GM10248 (cell line): ENCODE measurements at regions of chr2 and their contacts with region 1.

Region 1: DNA sequence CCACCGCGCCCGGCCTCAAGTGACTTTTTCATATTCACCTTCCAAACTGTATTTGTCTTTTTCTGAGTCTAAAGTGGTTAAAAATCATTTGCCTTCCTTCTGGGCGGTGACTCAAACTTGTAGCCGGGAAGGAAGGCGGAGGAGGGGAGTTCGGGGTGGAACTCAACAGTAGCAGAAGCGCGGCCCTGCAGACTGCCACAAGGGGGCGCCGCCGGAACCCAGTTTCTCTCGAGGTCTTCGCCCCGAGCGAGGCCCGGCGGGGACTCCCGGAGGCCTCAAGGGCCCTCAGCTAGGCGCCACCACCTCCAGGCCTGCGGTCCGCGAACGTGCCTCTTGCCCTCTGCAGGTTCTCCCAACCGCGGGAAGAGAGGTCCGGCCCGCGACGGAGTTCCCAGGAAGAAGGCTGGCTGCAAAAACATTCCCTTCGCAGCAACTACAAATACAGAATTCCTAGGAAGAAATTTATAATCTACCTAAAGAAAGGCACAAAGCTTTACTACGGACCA is 16.8 kb upstream of the ITM2C start:
- DNase-seq: peak; percentile 92
- CTCF ChIP-seq: peak; percentile 91

Region 2: GRCh38 chr2:230658877-230659652 is 188.9 kb before region 1 on chr2:
- CTCF ChIA-PET with region 1: no interaction called
- POLR2A ChIA-PET with region 1: no interaction called
- DNase-seq: peak; percentile 77
- CTCF ChIP-seq: no peak

Region 3: GRCh38 chr2:230864598-230865306 is 16.8 kb after region 1 on chr2 and contains the start of gene ITM2C:
- CTCF ChIA-PET with region 1: interaction called, 35 read pairs
- POLR2A ChIA-PET with region 1: no interaction called
- DNase-seq: peak; percentile 90
- CTCF ChIP-seq: peak; percentile 58

Region 4: DNA sequence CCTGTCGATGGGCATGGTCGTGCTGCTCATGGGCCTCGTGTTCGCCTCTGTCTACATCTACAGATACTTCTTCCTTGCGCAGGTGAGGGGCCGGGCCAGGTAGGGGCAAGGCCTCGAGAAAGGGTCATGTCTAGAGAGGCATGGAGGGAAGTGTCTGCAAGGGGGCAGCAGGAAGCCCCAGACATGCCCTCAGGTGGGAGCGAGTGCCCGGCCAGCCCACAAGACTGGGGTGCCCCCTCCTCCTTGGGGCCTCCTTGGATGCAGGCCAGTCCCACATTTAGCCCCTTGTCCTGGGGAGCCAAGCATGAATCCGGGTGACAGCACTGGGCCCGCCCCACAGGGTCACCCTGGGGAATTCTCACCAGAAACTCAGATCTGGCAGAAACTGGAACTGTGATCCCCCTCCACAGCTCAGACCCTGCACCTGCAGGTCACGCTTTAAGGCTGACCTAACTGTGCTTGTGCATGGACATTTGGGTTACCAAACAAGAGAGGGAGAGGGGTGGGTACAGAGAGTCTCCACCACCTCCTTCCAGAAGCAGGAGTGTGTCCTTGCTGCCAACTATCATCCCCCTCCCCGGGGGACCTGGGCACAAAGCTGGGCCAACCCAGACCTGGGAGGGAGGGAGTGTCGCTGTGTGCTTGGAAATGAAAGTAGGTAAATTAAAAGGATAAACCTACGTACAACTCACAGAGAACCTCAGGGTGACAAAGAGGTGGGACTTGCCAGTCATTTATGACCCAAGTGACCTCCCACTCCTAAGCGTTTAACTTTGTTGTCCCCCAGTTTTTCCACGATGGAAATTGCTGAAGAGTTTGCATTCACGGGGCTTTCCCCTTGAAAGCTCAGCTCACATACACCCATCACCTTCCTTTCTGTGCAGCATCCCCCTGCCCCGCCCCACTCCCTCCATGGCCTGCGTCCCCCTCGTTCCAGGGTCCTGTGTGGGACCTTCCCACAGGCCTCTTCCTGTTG is 25.8 kb after region 1 on chr2:
- CTCF ChIA-PET with region 1: interaction called, 13 read pairs
- POLR2A ChIA-PET with region 1: no interaction called
- DNase-seq: peak; percentile 78
- CTCF ChIP-seq: no peak

Region 5: DNA sequence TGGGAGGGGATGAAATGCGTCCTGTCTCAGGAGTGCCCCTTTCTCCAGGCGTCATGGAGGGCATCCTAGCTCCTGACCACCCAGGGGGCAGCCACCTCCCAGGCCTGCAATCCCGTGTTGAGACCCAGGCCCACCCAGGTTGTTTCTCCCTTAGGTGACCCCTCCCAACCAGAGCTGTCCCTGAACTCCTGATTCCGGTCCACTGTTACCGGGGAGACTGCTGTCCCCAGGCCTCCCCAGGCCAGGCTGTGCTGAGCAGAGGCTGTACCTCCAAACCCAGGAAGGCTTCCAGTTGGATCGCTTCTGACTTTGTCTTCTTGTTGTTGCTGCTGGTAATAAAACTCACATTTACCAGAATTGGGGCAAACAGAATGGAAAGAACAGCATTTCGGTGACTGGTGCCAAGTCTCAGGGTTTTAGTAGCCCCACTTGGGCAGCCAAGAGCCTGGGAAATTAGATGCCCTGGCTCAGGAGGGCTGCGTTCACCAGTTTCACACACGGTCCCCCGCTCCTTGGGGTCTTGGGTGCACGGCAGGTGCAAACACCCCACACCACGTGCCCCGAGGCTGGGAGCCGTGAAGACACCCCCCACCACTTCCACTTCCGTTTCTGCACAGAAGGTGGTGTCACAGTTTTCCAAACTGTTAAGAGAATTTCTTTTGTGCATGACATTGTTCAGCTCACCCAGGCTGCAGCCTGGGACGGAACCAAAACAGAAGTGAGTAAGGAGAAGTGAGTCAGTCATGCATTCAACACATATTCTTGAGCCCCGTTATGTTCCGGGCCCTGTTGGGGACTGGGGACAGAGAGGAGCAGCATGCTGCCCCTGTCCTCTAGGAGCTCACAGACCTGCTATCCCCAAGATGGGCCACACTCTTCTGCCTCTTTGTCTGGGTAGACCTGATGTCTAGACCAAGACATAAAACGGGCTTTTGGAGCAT is 46.2 kb after region 1 on chr2:
- CTCF ChIA-PET with region 1: interaction called, 13 read pairs
- POLR2A ChIA-PET with region 1: no interaction called
- DNase-seq: peak; percentile 60
- CTCF ChIP-seq: no peak

Region 6: GRCh38 chr2:230902180-230902899 is 54.4 kb after region 1 on chr2:
- CTCF ChIA-PET with region 1: interaction called, 13 read pairs
- POLR2A ChIA-PET with region 1: no interaction called
- DNase-seq: peak; percentile 77
- CTCF ChIP-seq: peak; percentile 97